ENCODE measurements at regions of chr14 and their contacts with region 1.

Region 1: GRCh38 chr14:90399541-90400444 is 3.0 kb downstream of the CALM1 start:
- DNase-seq: peak; percentile 97
- H3K4me3 ChIP-seq: peak overlapping the region; percentile 89 to 97 (median 97)
- H3K27ac ChIP-seq: peak overlapping the region; percentile 94 to 97 (median 95)
- H3K4me1 ChIP-seq: peaks cover 0 to 67% (median 58%) of the 10 kb centered on the region in 4 donors
- H3K27me3 ChIP-seq: no peaks in the 10 kb centered on the region
- CTCF ChIP-seq: peak; percentile 98 to 100 (median 98)
- EP300 ChIP-seq: peak in 1 of 4 donors; percentile 21
- POLR2A ChIP-seq: peak in 1 of 2 donors; percentile 28

Region 2: DNA sequence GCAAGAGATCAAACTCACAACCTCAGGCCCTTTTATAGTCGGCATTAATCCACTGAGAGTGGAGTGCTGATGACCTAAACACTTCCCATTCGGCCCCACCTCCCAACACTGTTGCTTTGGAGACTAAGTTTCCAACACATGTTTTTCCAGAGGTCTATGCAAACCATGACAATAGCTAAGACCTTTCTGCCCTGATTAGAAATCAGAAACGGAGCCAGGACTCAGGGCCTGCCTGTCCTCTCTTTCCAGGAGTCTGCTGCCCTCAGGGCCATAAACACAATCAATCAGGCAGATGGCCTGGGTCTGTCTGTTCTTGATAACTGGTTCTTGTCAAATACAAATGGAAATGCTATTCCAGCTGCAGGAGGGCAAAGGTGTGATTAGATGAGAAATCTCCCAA is 240.6 kb before region 1 on chr14:
- intact Hi-C with region 1: no loop called
- DNase-seq: no peak
- H3K4me3 ChIP-seq: no peak overlapping the region
- H3K27ac ChIP-seq: no peak overlapping the region
- H3K4me1 ChIP-seq: peaks cover 0 to 9% (median 3%) of the 10 kb centered on the region in 4 donors
- H3K27me3 ChIP-seq: no peaks in the 10 kb centered on the region
- CTCF ChIP-seq: no peak
- EP300 ChIP-seq: no peak
- POLR2A ChIP-seq: no peak

Region 3: DNA sequence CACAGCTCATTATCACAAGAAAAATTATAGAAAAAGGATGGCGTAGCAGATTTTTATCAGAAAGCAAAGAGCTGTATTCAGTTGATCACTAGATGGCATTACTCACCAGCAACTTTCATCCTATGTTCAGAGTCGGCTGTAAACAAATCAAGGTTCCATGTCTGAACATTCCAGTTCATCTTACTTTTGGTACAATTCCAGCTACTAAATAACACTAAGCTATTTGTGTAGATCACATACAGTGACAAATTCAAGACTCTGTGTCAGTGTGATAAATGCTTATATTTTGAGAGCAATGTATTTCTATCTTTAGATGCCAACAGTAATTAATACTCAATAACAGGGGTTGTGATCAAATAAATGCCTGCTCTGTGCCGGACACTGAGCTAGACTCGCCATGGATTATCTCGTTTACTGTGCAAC is 98.1 kb before region 1 on chr14:
- intact Hi-C with region 1: loop called (anchors 5 kb)
- DNase-seq: no peak
- H3K4me3 ChIP-seq: no peak overlapping the region
- H3K27ac ChIP-seq: peak overlapping the region; percentile 61 to 75 (median 72)
- H3K4me1 ChIP-seq: peaks cover 0 to 17% (median 16%) of the 10 kb centered on the region in 4 donors
- H3K27me3 ChIP-seq: no peaks in the 10 kb centered on the region
- CTCF ChIP-seq: peak; percentile 34 to 66 (median 46)
- EP300 ChIP-seq: no peak
- POLR2A ChIP-seq: no peak

Region 4: GRCh38 chr14:90383075-90383730 is 16.6 kb before region 1 on chr14:
- intact Hi-C with region 1: loop called (anchors 1 kb)
- DNase-seq: peak; percentile 100
- H3K4me3 ChIP-seq: peak overlapping the region; percentile 59 to 70 (median 64)
- H3K27ac ChIP-seq: peak overlapping the region; percentile 93 to 99 (median 97)
- H3K4me1 ChIP-seq: peaks cover 0 to 35% (median 33%) of the 10 kb centered on the region in 4 donors
- H3K27me3 ChIP-seq: no peaks in the 10 kb centered on the region
- CTCF ChIP-seq: no peak
- EP300 ChIP-seq: peak in 1 of 4 donors; percentile 21
- POLR2A ChIP-seq: peak; percentile 98

Region 5: DNA sequence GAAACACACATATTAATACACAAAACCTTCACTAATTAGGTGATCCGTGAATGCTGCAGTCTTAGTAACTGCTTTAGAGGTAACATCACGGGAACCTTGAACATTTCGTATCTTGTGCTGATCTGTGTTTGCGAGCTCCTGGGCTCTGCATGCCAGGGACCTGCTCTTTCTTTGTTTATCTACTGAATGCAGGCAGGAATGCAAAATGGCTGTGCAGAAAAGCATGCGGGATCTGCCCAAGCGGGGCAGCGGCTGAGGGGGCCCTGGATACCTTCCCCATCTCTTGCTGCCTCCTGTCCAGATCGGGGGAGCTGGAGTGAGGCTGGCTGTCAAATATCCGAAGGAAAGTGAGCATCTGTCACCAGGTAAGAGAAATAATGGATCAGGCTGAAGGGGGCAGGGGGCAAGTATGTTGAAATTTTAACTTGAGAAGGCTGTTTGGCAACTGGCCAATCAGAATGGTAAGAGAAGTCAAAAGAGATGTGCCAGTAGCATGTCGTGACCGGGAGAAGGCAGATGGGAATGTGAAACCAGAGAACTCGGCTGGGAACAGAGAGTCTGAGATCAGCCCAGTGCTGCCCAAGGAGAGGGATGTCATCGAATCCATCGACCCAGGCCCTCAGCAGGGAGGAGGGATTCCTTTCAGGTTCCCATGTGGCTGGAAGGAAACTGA is 225.1 kb after region 1 on chr14:
- intact Hi-C with region 1: loop called (anchors 5 kb)
- DNase-seq: no peak
- H3K4me3 ChIP-seq: no peak overlapping the region
- H3K27ac ChIP-seq: peak overlapping the region; percentile 71 to 84 (median 76)
- H3K4me1 ChIP-seq: peaks cover 0 to 58% (median 52%) of the 10 kb centered on the region in 4 donors
- H3K27me3 ChIP-seq: no peaks in the 10 kb centered on the region
- CTCF ChIP-seq: no peak
- EP300 ChIP-seq: no peak
- POLR2A ChIP-seq: no peak

Region 6: DNA sequence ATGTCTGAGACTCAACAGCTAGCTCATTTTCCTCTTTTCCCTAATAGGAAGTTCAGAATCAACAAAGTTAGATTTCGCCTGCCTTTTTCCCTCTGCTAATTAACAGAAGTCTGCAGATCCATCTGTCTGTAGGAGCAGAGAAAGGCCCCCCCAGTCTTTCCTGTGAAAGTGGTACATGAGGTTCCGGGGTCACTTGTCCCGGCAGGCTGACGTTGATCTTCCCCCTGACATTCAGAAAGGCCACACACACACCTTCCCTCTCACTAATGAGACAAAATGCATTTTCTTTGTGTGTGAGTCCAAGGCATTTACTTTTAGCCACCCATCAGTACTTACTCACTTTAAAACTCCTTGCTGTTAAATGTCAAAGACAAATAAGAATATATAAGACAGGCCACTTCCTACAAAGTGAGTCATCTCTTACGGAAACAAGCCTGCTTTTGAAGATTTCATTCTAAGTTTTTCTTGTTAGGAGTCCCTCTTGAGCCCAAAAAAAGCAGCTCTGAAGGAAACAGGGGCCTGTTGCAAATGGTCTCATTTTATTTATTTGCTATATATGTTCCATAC is 277.8 kb after region 1 on chr14:
- intact Hi-C with region 1: loop called (anchors 5 kb)
- DNase-seq: no peak
- H3K4me3 ChIP-seq: no peak overlapping the region
- H3K27ac ChIP-seq: peak overlapping the region; percentile 75 to 86 (median 84)
- H3K4me1 ChIP-seq: peaks cover 0 to 57% (median 47%) of the 10 kb centered on the region in 4 donors
- H3K27me3 ChIP-seq: no peaks in the 10 kb centered on the region
- CTCF ChIP-seq: no peak
- EP300 ChIP-seq: peak; percentile 59 to 84 (median 66)
- POLR2A ChIP-seq: no peak

Region 7: DNA sequence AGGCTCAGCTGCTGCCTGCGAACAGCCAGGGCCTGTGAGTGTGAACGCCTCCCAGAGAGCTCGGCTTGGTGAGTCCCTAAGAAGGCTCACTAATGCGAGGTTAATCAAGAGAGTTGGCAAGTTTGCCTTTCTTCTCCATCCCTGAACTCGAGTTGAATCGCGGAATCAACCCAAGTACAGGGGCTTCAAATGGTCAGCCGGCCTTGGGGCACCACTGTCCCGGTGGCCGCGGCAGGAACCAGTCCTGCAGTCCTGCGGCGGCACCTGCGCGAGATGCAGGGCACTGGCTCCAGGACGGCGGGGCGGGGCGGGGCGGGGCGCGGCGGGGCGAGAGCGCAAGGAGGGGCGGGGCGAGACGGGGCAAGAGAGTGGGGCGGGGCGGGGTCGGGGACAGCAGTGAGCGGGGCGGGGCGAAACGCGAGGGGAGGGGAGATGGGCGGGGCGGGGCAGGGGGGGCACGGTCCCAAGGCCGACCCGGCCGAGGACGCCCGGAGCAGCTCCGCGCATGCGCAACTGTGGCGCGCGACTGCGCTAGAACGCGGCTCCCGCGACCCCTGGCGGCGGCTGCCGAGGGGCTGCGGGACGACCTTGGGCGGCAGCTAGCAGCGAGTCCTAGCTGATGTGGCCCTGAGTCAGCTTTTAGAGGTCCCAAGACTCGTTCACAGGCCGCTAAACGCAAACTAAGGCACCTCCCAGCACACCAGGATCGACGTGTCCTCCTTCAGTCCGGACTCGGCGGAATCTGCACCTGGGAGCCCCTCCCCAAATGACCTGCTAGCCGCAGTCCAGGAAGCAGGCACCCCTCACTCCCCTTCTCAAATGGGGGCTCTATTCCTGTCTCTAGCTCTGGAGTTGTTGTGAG is 358.5 kb after region 1 on chr14:
- intact Hi-C with region 1: loop called (anchors 2 kb)
- DNase-seq: peak; percentile 95
- H3K4me3 ChIP-seq: peak overlapping the region; percentile 26 to 50 (median 46)
- H3K27ac ChIP-seq: peak overlapping the region; percentile 90 to 96 (median 92)
- H3K4me1 ChIP-seq: peaks cover 0 to 52% (median 36%) of the 10 kb centered on the region in 4 donors
- H3K27me3 ChIP-seq: no peaks in the 10 kb centered on the region
- CTCF ChIP-seq: peak; percentile 75 to 91 (median 85)
- EP300 ChIP-seq: no peak
- POLR2A ChIP-seq: peak in 1 of 2 donors; percentile 35

Measured in sigmoid colon (tissue), 7 donors.